Posterior vena cava (tissue), 2 donors: ENCODE measurements at regions of chr6 and their contacts with region 1.

Region 1: DNA sequence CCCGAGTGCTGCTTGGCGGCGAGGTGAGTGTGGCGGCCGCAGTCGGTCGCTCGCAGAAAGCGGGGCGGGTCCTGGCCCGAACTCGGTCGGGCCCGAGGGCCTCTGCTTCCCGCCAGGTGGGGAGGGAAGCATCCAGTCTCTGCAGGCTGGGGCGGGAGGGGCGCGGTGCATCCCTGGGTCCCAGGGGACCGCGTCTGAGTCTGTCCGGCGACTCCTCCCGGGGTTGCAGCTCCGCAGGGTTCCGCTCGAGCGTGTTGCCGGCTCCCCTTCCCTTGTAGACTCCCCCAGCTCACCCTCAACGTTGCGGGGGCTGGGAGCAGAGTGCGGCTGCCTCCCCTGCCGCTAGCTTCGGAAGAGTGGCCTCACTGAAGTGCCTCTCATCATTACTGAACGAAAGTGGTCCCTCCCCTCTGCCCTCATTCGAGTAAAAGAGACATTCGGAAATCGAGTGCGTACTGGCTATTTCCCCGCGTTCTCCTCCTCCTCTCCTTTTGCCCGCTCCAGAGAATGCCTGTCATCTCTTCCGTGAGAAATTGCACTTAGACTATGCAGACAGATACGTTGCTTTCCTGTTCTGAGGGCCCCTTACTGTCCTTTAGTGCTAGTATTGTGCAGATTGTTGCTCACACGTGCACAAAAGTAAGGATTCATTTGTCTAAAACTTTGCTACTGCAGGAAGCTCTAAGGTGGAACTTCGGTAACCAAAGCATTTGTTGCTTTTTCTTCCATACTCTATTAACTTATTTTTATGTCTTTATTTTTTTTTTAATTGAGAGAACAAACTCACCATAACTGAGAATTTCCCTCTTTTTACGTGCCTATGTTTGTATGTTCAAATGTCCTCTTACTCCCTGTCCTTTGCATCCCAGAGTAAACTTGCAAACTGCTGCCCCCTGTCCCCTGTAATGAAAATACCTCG is 751 bp downstream of the MAP3K4 start:
- DNase-seq: peak; percentile 87

Region 2: DNA sequence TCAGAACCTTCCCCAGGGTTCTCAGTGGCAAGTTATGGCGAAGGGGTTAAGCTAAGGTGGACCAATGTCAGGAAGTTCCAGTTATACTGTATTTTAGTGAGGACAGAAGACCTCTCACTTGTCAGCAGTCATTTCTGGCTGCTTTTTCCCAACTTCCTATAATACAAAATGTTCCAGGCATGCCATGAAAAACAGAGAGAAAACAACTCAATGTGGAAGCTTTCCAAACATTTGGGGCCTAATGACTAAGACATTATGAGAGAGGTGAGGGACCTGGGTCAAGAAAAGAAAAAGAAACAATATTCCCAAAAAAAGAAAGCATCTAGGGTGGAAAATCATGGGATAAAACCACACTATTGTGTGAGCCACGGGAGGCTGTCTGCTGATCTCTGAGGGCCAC is 100.6 kb before region 1 on chr6:
- intact Hi-C with region 1: no loop called
- DNase-seq: no peak

Region 3: GRCh38 chr6:160930547-160931377 is 61.6 kb before region 1 on chr6:
- intact Hi-C with region 1: loop called in 1 of 2 experiments (anchors 2 kb)
- DNase-seq: peak; percentile 94